ENCODE measurements at regions of chr6 and their contacts with region 1.

Region 1: DNA sequence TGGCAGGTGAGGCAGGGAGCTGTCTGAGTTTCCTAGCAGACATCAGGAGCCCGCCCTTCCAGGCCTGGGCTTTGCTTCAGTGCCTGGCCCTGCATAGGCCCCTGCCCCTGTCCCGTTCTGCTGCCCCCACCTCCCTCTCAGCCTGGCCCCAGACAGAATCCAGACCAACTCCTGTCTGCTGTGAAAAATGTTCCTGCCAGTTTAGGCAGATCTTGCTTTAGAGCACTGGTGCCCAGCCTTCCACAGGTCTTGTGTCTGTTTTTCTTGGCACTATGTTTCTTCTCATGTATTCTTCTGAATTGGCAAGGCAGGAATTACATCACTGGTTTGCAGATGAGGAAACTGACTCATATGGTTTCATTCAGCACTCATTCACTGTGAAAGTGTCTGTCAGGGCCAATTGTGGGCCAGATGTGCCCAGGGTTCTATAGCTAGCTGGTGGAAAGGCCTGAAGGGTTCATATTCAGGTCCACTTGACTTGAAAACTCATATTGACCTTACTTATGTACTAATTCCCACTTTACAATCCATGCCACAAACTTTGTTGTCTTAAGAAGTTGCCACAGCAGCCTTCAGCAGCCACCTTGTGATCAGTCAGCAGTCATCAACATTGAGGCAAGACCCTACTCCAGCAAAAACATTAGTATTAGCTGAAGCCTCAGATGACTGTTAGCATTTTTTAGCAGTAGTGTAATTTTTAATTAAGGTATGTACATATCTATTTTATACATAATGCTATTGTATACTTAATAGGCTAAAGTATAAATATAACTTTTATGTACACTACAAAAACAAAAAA is 40.5 kb downstream of the HLA-F start:
- DNase-seq: no peak
- ATAC-seq: no peak
- H3K4me3 ChIP-seq: no peak overlapping the region
- H3K4me3 Mint-ChIP-seq: no peak overlapping the region
- H3K27ac ChIP-seq: no peak overlapping the region
- H3K27ac Mint-ChIP-seq: no peak overlapping the region
- H3K4me1 ChIP-seq: peaks cover 3% of the 10 kb centered on the region
- H3K4me1 Mint-ChIP-seq: peaks cover 5% of the 10 kb centered on the region
- H3K27me3 ChIP-seq: no peaks in the 10 kb centered on the region
- H3K27me3 Mint-ChIP-seq: peaks cover 10% of the 10 kb centered on the region
- CTCF ChIP-seq: no peak

Region 2: GRCh38 chr6:29824144-29824543 is 60.5 kb after region 1 on chr6:
- CTCF ChIA-PET with region 1: no interaction called
- POLR2A ChIA-PET with region 1: no interaction called
- intact Hi-C with region 1: loop called in 1 of 2 experiments (anchors 5 kb)
- DNase-seq: no peak
- ATAC-seq: no peak
- H3K4me3 ChIP-seq: no peak overlapping the region
- H3K4me3 Mint-ChIP-seq: no peak overlapping the region
- H3K27ac ChIP-seq: no peak overlapping the region
- H3K27ac Mint-ChIP-seq: no peak overlapping the region
- H3K4me1 ChIP-seq: peaks cover 16% of the 10 kb centered on the region
- H3K4me1 Mint-ChIP-seq: no peaks in the 10 kb centered on the region
- H3K27me3 ChIP-seq: peaks cover 25 to 31% of the 10 kb centered on the region in 2 experiments
- H3K27me3 Mint-ChIP-seq: peaks cover 75% of the 10 kb centered on the region
- CTCF ChIP-seq: no peak

Region 3: DNA sequence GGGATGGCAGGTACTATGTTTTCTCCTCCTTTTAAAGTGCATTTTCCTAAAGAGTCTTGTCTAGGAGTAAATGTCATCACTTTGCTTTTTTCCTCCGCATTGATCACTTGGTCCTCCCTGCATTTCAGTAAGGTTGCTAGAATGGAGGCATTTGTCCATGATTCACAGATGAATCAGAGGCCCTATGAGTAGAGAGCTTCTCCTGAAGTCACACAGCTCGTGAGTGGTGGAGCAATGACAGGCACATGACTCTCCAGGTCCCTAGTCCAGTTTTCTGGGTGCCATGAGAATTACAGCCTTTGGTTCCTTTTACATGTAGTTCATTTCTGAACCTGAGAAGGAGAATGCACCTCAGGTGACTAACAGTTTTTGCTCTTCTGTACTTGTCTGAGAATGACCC is 229.1 kb after region 1 on chr6:
- CTCF ChIA-PET with region 1: no interaction called
- POLR2A ChIA-PET with region 1: no interaction called
- intact Hi-C with region 1: loop called in 1 of 2 experiments (anchors 1 kb)
- DNase-seq: no peak
- ATAC-seq: no peak
- H3K4me3 ChIP-seq: no peak overlapping the region
- H3K4me3 Mint-ChIP-seq: no peak overlapping the region
- H3K27ac ChIP-seq: no peak overlapping the region
- H3K27ac Mint-ChIP-seq: no peak overlapping the region
- H3K4me1 ChIP-seq: no peaks in the 10 kb centered on the region
- H3K4me1 Mint-ChIP-seq: no peaks in the 10 kb centered on the region
- H3K27me3 ChIP-seq: no peaks in the 10 kb centered on the region
- H3K27me3 Mint-ChIP-seq: no peaks in the 10 kb centered on the region
- CTCF ChIP-seq: no peak

Measured in CD4-positive, alpha-beta T cell (primary cell).